Transverse colon (tissue), 4 donors: ENCODE measurements at regions of chr5 and their contacts with region 1.

Region 1: GRCh38 chr5:32076699-32077695 is 97.1 kb downstream of the GOLPH3 start:
- DNase-seq: peak; percentile 27
- H3K4me3 ChIP-seq: no peak overlapping the region
- H3K27ac ChIP-seq: no peak overlapping the region
- H3K4me1 ChIP-seq: no peaks in the 10 kb centered on the region
- H3K27me3 ChIP-seq: no peaks in the 10 kb centered on the region
- CTCF ChIP-seq: peak; percentile 53 to 66 (median 61)
- EP300 ChIP-seq: no peak
- POLR2A ChIP-seq: no peak

Region 2: DNA sequence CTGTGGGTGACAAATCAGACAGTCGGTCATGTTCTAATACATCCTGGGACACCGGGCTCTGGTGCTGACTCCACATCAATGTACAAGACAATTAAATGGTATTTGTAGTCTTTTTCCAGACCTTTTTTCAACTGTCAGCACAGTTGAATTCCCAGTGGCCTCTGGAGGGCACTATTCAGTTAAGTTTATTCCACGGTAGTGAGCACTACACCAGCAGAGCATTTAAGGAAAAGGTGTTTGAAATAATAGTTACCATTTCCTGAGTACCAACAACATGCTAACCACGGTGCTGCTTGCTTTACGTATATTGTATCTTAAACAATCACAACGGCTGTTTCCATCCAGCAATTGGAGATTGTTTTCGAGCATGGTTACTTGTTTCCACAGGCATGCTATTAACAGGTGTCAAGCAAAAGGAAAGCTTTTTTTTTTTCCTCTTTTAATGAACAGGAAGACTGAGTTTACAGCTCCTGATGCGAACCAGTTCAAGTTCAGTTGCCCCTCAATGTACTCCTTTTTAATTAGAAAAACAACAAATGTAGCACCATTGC is 251.4 kb before region 1 on chr5:
- in situ Hi-C with region 1: loop called (anchors 5 to 25 kb)
- intact Hi-C with region 1: no loop called
- DNase-seq: peak; percentile 21
- H3K4me3 ChIP-seq: no peak overlapping the region
- H3K27ac ChIP-seq: no peak overlapping the region
- H3K4me1 ChIP-seq: no peaks in the 10 kb centered on the region
- H3K27me3 ChIP-seq: no peaks in the 10 kb centered on the region
- CTCF ChIP-seq: peak; percentile 41 to 52 (median 46)
- EP300 ChIP-seq: no peak
- POLR2A ChIP-seq: no peak

Region 3: GRCh38 chr5:32044939-32045338 is 32.1 kb before region 1 on chr5:
- in situ Hi-C with region 1: no loop called
- intact Hi-C with region 1: no loop called
- DNase-seq: no peak
- H3K4me3 ChIP-seq: no peak overlapping the region
- H3K27ac ChIP-seq: no peak overlapping the region
- H3K4me1 ChIP-seq: no peaks in the 10 kb centered on the region
- H3K27me3 ChIP-seq: no peaks in the 10 kb centered on the region
- CTCF ChIP-seq: no peak
- EP300 ChIP-seq: no peak
- POLR2A ChIP-seq: no peak

Region 4: DNA sequence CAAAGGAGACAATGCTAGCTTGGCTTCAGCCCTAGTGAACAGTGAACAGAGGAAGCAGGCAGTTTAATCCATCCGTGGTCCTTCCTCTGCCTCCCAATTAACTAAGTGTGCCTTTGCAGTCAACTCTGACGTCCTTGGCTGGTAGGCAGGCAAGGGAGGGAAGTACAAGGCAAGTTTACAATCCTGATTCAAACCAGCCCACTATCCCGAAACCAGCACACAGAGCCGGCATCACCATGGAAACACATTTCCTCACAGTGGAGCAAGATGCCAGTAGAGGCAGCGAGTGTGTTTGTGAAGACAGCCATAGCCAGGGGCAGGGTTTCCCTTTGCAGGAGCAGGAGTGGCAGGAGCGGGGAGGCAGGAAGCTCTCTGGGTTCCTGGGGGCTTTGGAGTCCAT is 23.2 kb after region 1 on chr5:
- in situ Hi-C with region 1: no loop called
- intact Hi-C with region 1: no loop called
- DNase-seq: no peak
- H3K4me3 ChIP-seq: no peak overlapping the region
- H3K27ac ChIP-seq: peak overlapping the region in 3 of 4 donors; percentile 58 to 69 (median 59)
- H3K4me1 ChIP-seq: peaks cover 0 to 6% (median 5%) of the 10 kb centered on the region in 4 donors
- H3K27me3 ChIP-seq: no peaks in the 10 kb centered on the region
- CTCF ChIP-seq: no peak
- EP300 ChIP-seq: no peak
- POLR2A ChIP-seq: no peak